ENCODE measurements at regions of chr1 and their contacts with region 1.

Region 1: DNA sequence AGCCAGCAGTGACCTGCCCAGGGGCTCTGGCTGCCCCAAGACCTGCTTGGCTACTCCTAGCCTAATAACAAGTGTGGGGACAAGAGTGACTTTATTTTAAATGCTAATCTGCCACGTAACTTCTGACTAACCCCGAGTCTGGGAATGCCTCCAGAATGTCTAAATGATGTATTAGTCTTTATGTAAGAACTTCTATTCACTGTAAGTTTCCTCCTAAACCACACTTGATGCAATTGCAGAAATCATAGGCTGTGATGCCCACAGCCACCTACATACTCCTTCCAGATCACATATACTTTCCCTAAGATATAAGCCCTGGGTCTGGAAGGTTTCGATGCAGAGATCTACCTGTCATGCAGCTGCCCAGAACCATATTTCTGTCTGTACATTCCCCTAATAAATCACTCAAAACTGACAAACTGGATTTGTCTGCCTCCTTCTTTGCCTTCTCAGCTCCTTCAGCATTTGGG is 5.9 kb upstream of the VPS45 start:
- DNase-seq: peak; percentile 93
- H3K4me3 ChIP-seq: no peak overlapping the region
- CTCF ChIP-seq: no peak

Region 2: GRCh38 chr1:149979972-149980540 is 81.6 kb before region 1 on chr1:
- in situ Hi-C with region 1: loop called (anchors 5 kb)
- DNase-seq: no peak
- H3K4me3 ChIP-seq: no peak overlapping the region
- CTCF ChIP-seq: no peak